Caco-2 (cell line): ENCODE measurements at regions of chr3 and their contacts with region 1.

Region 1: GRCh38 chr3:121855555-121855954 is 20.5 kb downstream of the EAF2 start:
- DNase-seq: peak in 1 of 2 experiments; percentile 55
- H3K4me3 ChIP-seq: no peak overlapping the region
- H3K4me3 Mint-ChIP-seq: no peak overlapping the region
- H3K27ac Mint-ChIP-seq: no peak overlapping the region
- H3K4me1 ChIP-seq: no peaks in the 10 kb centered on the region
- H3K4me1 Mint-ChIP-seq: no peaks in the 10 kb centered on the region
- H3K27me3 ChIP-seq: no peaks in the 10 kb centered on the region
- H3K27me3 Mint-ChIP-seq: no peaks in the 10 kb centered on the region
- CTCF ChIP-seq: peak; percentile 34 to 40

Region 2: DNA sequence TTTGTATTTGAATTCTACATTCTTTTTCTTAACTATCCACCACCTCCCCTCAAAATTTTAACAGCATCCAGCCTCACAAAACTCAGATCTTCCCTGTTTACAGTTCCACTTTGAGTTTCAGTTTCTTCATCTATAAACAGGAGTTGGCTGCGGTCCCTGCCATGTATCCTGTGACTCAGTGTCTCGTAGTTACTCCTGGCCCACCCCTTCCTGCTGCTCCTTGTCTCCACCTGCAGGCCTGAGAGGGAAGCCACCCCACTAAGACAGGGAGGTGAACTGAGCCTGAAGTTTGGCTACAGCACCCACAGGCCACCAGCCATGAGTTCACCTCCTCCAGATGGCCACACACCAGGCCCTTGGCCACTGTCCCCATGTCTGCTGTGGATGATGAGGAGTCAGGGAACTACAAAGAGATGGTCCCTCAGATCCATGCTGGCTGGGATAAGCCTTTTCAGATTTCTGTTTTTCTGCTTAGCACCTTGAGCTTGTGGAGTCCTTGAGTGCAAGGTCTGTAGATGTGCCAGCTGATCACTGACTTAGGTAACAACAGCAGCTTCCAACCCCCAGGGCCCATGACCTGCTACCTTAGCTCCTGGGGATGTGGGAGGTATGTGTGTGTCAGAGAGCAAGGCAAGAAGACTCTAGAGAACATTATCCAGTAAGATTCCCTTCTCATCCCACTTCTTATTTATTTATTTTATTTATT is 237.1 kb after region 1 on chr3:
- CTCF ChIA-PET with region 1: no interaction called
- POLR2A ChIA-PET with region 1: no interaction called
- intact Hi-C with region 1: loop called (anchors 10 kb)
- DNase-seq: peak in 1 of 2 experiments; percentile 12
- H3K4me3 ChIP-seq: no peak overlapping the region
- H3K4me3 Mint-ChIP-seq: no peak overlapping the region
- H3K27ac Mint-ChIP-seq: no peak overlapping the region
- H3K4me1 ChIP-seq: no peaks in the 10 kb centered on the region
- H3K4me1 Mint-ChIP-seq: no peaks in the 10 kb centered on the region
- H3K27me3 ChIP-seq: no peaks in the 10 kb centered on the region
- H3K27me3 Mint-ChIP-seq: peaks cover 4% of the 10 kb centered on the region
- CTCF ChIP-seq: peak in 1 of 2 experiments; percentile 34

Region 3: GRCh38 chr3:122258757-122259371 is 403.3 kb after region 1 on chr3:
- CTCF ChIA-PET with region 1: no interaction called
- POLR2A ChIA-PET with region 1: no interaction called
- intact Hi-C with region 1: loop called (anchors 2 kb)
- DNase-seq: peak; percentile 68 to 69
- H3K4me3 ChIP-seq: no peak overlapping the region
- H3K4me3 Mint-ChIP-seq: no peak overlapping the region
- H3K27ac Mint-ChIP-seq: no peak overlapping the region
- H3K4me1 ChIP-seq: no peaks in the 10 kb centered on the region
- H3K4me1 Mint-ChIP-seq: no peaks in the 10 kb centered on the region
- H3K27me3 ChIP-seq: peaks cover 1% of the 10 kb centered on the region; the same call in 1 of the 2 replicates
- H3K27me3 Mint-ChIP-seq: peaks cover 15% of the 10 kb centered on the region
- CTCF ChIP-seq: peak; percentile 47 to 76